Activated CD4-positive, alpha-beta memory T cell treated with anti-CD3 and anti-CD28 coated beads, Interleukin-2, amount 10 ng/mL, durations not matched to agents 7 days and 5 days (primary cell): ENCODE measurements at regions of chr6 and their contacts with region 1.

Region 1: DNA sequence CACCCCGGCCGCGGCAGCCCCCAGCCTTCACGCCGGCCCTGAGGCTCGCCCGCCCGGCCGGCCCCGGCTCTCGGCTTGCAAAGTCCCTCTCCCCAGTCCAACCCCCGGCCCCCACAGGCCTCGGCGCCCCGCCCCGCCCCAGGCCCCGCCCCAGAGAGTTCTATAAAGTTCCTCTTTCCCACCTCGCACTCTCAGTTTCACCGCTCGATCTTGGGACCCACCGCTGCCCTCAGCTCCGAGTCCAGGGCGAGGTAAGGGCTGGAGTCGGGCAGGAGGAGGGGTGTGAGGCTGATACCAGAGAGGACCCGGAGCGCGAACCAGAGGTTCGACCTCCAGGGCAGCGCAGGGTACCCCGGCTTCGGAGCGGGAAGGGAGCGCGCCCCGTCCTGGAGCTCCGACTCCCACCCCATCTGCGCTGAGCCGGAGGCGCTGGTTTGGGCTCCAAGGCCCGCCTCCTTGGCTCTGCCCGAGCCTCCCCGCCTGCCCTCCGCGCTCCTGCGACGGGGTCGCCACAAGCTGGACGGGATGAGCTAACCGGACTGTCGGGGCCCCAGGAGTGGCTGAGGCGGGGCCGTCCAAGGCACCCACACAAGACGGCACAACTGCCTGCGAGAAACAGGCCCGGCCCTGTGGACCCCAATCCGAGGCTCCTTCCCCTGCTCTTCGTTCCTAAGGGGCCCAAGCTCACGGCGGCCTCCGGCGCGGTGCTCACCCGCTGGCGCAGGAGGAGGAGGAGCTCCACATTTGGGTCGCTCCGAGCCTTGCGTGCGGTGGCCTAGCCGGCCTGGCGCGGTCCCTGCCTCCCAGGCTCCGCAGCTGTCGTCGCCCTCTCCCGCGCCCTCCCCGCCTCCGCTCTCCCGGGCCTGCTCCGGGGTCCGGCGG is at the start of gene IRF4:
- DNase-seq: peak; percentile 76
- H3K4me3 Mint-ChIP-seq: peak within 1 kb of the TSS; percentile 98
- H3K27ac Mint-ChIP-seq: peak within 1 kb of the TSS; percentile 98
- H3K4me1 Mint-ChIP-seq: peaks cover 56% of the 10 kb centered on the region
- H3K27me3 Mint-ChIP-seq: no peaks in the 10 kb centered on the region
- total RNA-seq, gene IRF4: 171 to 178 TPM

Region 2: DNA sequence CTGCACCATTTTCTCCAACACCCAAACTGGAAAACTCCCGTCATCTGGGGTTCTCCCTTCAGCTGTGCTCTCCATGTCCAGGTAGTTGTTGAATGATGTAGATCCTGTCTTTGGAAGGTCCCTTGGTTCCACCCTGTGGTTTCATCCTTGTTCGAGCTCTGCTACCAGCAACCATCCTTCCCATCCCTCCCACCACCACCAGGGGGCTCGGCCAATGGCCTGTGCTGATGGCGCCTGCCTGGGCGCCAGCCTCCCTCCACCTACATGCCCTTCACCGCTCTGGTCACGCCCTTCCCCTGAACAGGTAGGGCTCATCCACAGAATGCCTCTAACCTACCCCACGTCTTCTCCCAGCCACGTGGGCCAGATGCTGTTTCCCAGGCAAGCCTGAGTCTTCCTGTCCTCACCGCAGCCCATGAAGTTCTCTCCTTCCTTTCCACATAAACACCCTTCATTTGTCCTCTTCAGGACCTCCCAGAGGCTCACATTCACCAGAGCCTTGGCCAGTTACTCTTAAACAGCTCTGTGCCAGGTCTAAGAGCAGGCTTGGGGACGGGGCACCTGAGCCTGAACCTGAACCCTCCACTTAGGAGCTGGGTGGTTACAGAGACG is 174.6 kb before region 1 on chr6:
- CTCF ChIA-PET with region 1: interaction called, 4 read pairs
- POLR2A ChIA-PET with region 1: interaction called, 137 read pairs
- DNase-seq: no peak
- H3K4me3 Mint-ChIP-seq: no peak overlapping the region
- H3K27ac Mint-ChIP-seq: peak overlapping the region; percentile 11
- H3K4me1 Mint-ChIP-seq: peaks cover 65% of the 10 kb centered on the region
- H3K27me3 Mint-ChIP-seq: peaks cover 12% of the 10 kb centered on the region

Region 3: GRCh38 chr6:328136-328670 is 63.6 kb before region 1 on chr6:
- CTCF ChIA-PET with region 1: interaction called, 3 read pairs
- POLR2A ChIA-PET with region 1: interaction called, 13 read pairs
- DNase-seq: peak; percentile 45
- H3K4me3 Mint-ChIP-seq: no peak overlapping the region
- H3K27ac Mint-ChIP-seq: no peak overlapping the region
- H3K4me1 Mint-ChIP-seq: no peaks in the 10 kb centered on the region
- H3K27me3 Mint-ChIP-seq: no peaks in the 10 kb centered on the region

Region 4: GRCh38 chr6:369559-370431 is 22.0 kb before region 1 on chr6:
- CTCF ChIA-PET with region 1: no interaction called
- POLR2A ChIA-PET with region 1: no interaction called
- DNase-seq: no peak
- H3K4me3 Mint-ChIP-seq: no peak overlapping the region
- H3K27ac Mint-ChIP-seq: no peak overlapping the region
- H3K4me1 Mint-ChIP-seq: no peaks in the 10 kb centered on the region
- H3K27me3 Mint-ChIP-seq: peaks cover 36% of the 10 kb centered on the region

Region 5: GRCh38 chr6:436308-437036 is 44.7 kb after region 1 on chr6:
- CTCF ChIA-PET with region 1: interaction called, 3 read pairs
- POLR2A ChIA-PET with region 1: interaction called, 16 read pairs
- DNase-seq: peak; percentile 15
- H3K4me3 Mint-ChIP-seq: no peak overlapping the region
- H3K27ac Mint-ChIP-seq: no peak overlapping the region
- H3K4me1 Mint-ChIP-seq: peaks cover 44% of the 10 kb centered on the region
- H3K27me3 Mint-ChIP-seq: peaks cover 15% of the 10 kb centered on the region

Region 6: DNA sequence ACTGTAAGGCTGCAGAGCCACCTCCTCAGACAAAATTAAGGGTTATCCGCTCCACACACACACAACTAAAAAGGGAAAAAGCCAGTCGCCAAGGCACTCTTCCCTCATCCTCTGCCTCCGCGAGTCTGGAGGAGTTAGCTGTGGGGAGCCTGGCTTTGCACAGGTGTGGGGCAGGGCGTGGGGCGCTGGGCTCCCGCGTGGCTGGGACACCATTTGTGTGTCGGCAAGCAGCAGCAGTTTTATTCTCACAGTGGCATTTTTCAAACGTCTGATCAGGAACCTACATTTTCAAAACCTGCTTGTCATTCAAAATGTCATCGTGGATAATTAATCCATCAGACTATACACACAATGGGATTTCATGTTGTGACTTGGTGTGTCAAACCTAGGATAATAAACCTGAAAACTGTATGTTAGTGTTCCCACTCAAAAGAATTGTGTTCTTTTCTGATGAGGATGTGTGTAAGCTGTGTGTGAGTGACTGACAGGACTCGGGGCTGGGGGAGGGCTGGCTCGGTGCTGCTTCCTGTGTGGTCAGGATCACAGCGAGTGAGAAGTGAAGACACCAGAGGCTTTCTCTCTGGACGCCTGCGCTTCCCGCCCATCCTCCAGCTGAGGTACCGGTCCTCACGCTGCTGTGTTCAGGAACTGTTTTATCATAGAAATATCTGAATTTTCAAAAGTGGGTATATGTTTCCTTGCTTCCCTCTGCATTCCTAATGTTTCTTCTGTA is 82.8 kb after region 1 on chr6:
- CTCF ChIA-PET with region 1: interaction called, 4 read pairs
- POLR2A ChIA-PET with region 1: interaction called, 11 read pairs
- DNase-seq: peak; percentile 87
- H3K4me3 Mint-ChIP-seq: peak overlapping the region; percentile 46
- H3K27ac Mint-ChIP-seq: peak overlapping the region; percentile 42
- H3K4me1 Mint-ChIP-seq: peaks cover 60% of the 10 kb centered on the region
- H3K27me3 Mint-ChIP-seq: peaks cover 43% of the 10 kb centered on the region

Region 7: DNA sequence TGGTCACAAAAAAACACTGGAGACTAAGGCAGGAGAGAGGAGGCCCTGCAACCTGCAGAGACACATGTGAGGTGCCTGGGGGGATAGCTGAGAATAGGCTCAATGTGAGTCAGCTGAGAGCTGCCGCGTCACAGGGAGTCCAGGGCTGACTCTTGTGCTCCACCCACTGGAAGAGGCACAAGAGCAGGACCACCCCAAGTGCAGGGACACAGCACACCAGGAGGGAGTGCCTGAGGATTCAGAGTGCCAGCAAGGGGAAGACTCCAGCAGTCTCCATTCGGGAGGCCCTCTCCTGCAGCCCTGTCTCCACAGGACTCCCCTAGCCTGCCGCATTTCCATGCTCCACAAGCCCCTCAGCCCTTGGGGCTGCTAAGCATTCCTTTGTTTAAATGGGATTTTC is 159.6 kb after region 1 on chr6:
- CTCF ChIA-PET with region 1: interaction called, 6 read pairs
- POLR2A ChIA-PET with region 1: interaction called, 26 read pairs
- DNase-seq: no peak
- H3K4me3 Mint-ChIP-seq: no peak overlapping the region
- H3K27ac Mint-ChIP-seq: no peak overlapping the region
- H3K4me1 Mint-ChIP-seq: peaks cover 54% of the 10 kb centered on the region
- H3K27me3 Mint-ChIP-seq: no peaks in the 10 kb centered on the region

Region 8: GRCh38 chr6:650098-650497 is 258.3 kb after region 1 on chr6:
- CTCF ChIA-PET with region 1: no interaction called
- POLR2A ChIA-PET with region 1: no interaction called
- DNase-seq: no peak
- H3K4me3 Mint-ChIP-seq: no peak overlapping the region
- H3K27ac Mint-ChIP-seq: no peak overlapping the region
- H3K4me1 Mint-ChIP-seq: peaks cover 14% of the 10 kb centered on the region
- H3K27me3 Mint-ChIP-seq: no peaks in the 10 kb centered on the region

Region 9: DNA sequence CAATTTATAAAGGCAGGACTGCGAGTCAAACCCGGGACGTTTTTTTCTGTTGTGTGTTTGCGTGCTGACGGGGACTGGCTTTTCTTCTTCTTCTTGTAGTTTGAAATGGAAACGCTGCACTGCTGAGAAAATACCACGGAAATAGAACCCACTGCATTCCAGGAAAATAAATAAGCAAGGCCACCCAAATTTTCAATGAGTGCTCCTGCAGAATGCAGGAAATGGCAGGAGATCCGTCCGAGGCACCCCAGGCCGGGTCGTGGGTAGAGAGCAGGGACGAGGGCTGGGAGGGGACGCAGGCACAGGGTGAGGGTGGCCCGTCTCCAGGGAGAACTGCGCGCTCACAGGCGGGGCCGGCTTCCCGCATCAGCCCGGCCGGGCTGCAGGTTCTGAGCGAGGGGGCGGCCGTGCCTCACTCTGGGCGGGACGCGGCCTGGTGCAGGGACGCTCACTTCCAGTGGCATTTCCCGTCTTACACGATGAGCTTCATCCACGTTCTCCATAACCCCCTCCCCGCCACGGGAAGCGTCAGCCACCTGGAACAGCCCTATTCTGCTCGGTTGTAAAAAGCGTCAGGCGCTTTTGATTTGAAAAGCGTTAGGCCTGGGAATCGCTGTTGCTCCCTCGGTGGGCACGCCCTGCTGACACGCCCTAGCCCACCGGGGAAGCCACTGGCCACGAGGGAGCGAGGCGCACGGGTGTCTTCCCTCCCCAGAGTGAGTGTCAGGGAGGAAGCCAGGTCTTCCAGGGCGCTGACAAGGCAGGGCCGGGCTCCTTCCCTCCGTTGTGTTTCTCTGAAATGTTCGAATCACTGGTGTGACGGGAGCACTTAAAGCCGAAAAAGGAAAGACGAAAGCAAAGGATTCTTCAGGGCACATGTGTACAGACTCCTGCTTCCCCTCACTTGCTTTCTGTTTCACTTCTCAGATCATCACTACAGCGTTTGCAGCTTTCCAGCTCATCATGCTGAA is 319.1 kb after region 1 on chr6:
- CTCF ChIA-PET with region 1: no interaction called
- POLR2A ChIA-PET with region 1: interaction called, 17 read pairs
- DNase-seq: peak; percentile 68
- H3K4me3 Mint-ChIP-seq: peak overlapping the region; percentile 94
- H3K27ac Mint-ChIP-seq: peak overlapping the region; percentile 99
- H3K4me1 Mint-ChIP-seq: peaks cover 48% of the 10 kb centered on the region
- H3K27me3 Mint-ChIP-seq: peaks cover 4% of the 10 kb centered on the region

Region 10: DNA sequence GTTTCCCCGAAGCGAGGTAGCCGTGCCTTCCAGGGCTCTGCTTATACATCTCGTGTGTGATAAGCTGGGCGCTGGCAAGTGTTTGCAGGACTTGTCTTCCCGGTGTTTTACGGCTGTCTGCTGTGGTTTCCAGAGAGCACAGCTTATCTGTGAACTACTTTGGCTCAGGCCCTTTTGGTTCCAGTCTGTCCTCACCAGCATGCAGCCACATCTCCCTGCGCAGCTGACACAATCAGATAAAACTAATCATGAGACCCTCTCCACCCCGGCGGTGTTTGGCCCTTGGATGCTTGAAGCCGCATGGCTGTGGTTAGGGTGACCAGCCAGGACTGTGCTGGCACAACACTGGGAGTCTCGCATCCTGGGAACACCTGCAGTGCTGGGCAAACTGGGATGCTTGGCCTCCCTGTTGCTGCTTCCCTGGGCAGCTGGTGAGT is 678.3 kb after region 1 on chr6:
- CTCF ChIA-PET with region 1: no interaction called
- POLR2A ChIA-PET with region 1: no interaction called
- DNase-seq: no peak
- H3K4me3 Mint-ChIP-seq: no peak overlapping the region
- H3K27ac Mint-ChIP-seq: no peak overlapping the region
- H3K4me1 Mint-ChIP-seq: no peaks in the 10 kb centered on the region
- H3K27me3 Mint-ChIP-seq: peaks cover 5% of the 10 kb centered on the region